Left cardiac atrium (tissue), 4 donors: ENCODE measurements at regions of chr10 and their contacts with region 1.

Region 1: GRCh38 chr10:132637477-132638129 is 100.0 kb downstream of the INPP5A start:
- DNase-seq: no peak
- ATAC-seq: peak; percentile 60 to 69

Region 2: DNA sequence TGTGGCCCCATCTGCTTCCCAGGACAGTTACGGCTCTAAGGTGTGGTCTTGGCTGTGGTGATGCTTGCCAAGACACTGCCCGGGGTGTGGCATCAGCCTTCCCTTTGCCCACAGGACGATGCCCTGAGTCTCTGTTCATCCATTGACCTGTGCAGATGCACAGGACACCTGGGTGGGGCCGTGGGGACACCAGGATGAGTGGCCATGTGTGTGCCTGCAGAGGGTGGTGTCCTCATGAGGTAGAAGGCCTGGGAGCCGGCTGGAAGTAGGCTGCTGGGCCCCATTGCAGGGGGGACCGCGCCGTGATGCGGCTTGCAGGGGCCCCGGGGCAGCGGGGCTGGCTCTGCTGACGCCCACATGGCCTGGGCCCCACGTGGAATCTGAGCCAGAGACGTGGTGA is 263.0 kb before region 1 on chr10:
- intact Hi-C with region 1: no loop called
- DNase-seq: no peak
- ATAC-seq: no peak

Region 3: GRCh38 chr10:132458593-132459300 is 178.9 kb before region 1 on chr10:
- intact Hi-C with region 1: loop called (anchors 1 to 2 kb)
- DNase-seq: peak; percentile 59
- ATAC-seq: peak; percentile 65 to 74

Region 4: DNA sequence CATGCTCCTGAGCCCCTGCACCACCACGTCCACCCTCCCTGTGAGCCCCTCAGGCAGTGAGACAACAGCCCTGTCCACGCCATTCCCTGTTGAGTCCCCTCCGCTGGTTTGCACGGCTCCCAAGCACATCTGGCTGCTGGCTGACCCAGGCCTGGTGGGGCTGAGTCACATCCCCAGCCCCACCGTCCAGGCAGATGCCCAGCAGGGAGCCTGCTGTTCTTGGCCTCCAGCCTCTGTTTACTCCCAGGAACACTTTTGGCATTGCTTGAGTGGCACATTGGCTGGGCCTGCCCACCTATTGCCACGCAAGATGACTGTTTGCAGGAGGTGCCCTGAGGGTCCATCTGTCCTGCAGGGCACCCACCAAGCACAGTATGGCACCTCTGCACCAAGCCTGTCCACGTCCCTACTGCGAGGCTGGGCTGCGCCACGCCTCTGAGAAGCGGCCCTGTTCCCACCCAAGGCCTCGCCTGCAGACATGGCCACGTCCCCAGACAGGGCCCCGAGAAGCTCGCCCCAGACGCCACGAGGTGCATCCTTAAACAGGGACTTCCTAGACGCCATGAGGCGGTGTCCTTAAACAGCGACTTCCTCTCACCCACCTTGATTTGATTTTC is 148.4 kb before region 1 on chr10:
- intact Hi-C with region 1: no loop called
- DNase-seq: no peak
- ATAC-seq: no peak

Region 5: GRCh38 chr10:132506711-132507408 is 130.7 kb before region 1 on chr10:
- intact Hi-C with region 1: loop called in 1 of 2 experiments (anchors 5 kb)
- DNase-seq: no peak
- ATAC-seq: peak; percentile 42 to 46

Region 6: DNA sequence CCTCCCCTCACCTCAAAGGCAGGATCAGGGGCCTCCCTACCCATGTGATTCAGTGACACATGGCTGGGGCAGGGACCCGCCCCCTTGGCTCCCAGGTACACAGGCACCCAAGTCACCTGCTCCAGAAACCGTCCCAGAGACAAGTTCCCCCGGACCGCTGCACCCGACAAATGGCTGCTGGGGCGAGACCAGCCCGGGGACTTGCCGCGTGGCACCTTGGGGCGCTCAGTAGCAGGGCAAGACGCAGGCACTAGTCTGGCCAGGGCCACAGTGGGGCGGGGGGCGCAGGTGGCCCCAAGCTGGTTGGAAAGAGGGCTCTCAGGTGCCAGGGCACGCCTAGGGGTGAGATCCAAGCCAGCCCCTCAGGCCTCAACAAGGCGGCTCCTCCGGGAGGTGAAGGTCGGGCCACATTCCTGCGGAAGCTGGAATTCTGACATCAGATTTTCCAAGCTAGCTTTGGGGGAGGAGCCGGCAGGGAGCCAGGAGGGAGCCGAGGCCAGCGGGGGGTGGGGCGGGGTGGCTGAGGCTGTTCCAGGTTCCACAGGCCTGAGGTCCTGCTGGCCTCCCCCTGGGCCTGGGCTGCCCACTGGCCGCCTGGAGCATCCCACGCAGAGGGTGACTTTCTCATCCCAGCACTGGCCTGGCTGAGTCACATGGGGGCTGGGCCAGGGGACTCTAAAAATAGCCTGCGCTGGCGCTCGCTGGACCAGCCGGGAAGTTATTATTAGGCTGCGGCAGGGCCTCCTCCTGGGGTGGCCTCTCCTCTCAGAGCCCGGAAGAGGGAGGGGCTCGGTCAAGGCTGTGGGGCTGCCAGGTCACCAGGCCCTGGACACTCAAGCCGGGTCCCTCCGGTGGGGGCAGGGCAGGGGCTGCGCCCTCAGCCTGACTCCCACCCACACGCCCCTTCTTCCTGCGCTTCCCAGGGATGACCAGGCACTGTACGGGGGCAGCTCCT is 120.6 kb before region 1 on chr10:
- intact Hi-C with region 1: loop called in 1 of 2 experiments (anchors 5 kb)
- DNase-seq: peak; percentile 95
- ATAC-seq: peak; percentile 90 to 91

Region 7: GRCh38 chr10:132536971-132537712 is 100.5 kb before region 1 on chr10:
- intact Hi-C with region 1: loop called (anchors 1 to 10 kb)
- DNase-seq: peak; percentile 100
- ATAC-seq: peak; percentile 94 to 96

Region 8: DNA sequence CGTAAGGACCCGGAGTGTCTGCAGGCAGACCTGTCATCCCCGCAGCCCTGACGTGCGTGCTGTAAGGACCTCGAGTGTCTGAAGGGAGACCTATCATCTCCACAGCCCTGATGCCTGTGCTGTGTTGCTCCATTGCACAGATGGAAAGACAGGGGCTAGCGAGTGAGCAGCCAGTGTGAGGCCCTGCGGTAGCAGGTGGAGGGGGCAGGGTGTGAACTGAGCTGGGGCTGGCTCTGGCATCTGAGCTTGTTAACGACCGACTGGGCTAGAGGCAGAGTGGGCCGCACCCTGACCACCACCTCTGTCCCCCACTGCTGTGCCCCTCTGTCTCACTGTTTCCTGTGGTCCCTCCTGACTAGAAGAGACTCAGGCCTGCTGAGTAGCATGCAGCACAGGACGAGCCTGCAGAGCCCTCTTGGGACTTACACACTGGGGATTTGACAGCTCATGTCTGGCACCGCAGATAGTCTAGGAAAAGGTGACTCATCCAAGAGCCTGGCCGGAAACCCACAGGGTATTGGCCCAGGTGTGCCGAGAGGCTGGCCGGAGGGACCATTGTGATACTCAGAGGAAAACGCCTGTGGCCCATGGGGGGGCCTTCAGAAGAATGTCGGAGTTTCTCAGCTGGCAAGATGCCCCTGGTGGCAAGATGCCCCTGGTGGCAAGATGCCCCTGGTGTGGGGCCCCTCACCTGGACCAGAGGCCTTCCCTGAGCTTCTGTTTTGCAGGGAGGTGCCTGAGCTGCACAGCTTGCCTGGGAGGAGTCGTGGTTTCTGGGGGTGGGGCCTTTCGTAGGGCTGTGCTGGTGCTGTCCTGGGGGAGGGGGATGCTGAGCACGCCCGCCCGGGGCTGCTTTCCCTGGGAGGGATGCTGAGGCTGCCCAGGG is 65.7 kb before region 1 on chr10:
- intact Hi-C with region 1: loop called in 1 of 2 experiments (anchors 10 kb)
- DNase-seq: no peak
- ATAC-seq: peak; percentile 39 to 93

Region 9: GRCh38 chr10:132588301-132589013 is 49.1 kb before region 1 on chr10:
- intact Hi-C with region 1: loop called in 1 of 2 experiments (anchors 5 kb)
- DNase-seq: peak; percentile 59
- ATAC-seq: peak; percentile 36 to 45

Region 10: DNA sequence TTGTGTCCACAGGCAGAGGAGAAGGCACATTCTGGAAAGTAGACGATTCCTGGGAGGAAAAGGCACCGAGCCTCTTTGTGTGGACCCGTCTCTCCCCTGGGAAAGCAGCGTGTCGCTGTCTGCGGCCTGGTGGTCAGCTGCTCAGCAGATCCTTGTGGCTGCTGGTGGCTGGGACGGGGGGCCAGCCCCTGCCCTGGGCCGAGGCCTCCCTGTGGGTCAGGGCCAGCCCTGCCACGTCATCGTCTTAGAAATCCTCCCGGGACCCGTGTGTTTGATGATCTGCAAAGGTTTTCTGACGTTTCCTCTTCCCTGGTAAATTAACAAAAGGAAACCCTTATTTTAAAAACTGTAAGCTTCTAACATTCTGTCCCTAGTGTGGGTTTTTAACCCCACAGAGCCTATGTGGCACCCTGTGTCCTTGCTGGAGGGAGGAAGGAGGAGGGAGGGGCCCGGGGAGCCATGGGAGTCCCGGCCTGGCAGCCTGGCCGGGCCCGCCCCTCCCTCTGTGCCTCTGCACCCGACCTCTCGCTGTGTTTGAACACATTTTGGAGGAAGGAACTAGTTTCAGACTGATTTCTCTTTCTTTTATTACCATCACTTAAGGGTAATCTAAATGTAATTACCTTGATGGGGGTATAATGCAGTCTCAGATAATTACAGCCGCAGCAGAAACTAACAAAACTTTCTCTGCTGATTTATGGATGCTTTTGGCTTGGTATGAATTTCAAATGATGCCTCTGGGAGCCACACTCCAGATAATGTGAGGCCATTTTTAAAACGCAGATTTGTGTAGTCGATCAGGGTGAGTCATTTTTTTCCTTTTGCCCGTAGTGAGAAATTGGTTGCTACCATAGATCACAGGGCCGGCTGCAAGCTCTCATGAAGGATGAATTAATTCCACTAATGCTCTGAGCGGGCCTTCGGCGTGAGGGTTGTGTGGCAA is 62.8 kb after region 1 on chr10:
- intact Hi-C with region 1: no loop called
- DNase-seq: peak; percentile 25
- ATAC-seq: peak in 1 of 2 donors; percentile 21